ENCODE measurements at regions of chr4 and their contacts with region 1.

Region 1: DNA sequence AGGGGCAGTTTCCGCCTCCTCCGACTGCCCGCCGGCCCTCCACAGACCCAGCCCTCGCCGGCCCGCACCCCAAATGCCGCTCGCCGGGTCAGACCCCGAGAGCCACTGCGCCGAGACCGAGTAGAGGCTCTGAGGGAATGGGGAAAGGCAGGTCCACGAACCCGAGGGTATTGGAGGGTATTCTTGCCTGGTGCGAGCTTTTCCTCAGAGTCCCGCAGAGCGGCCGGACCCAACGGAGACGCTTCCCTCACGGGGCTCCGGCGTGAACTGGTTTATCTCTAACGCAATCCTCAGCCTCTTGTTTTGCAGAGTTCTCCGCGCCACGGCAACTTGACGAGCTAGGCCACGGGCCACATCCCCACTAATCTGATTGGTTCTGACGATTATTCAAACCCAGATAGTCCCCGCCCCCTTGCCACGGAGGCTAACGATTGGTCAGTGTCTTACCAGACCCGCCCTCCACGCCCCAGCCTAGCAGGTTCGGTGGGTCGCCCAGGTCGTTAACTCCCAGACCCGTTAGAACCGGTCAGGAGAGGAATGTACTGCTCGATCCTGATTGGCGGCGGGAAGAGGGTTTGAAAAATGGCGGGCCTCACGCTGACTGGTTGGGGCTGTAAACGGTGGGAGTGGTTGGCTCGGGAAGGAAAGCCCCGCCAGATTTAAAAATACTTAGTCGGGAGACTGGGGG is at the start of gene HMGB2:
- DNase-seq: peak; percentile 100
- ATAC-seq: peak; percentile 95 to 96
- H3K4me3 ChIP-seq: peak within 1 kb of the TSS; percentile 83 to 98 (median 92)
- H3K27ac ChIP-seq: peak within 1 kb of the TSS; percentile 94 to 99 (median 98)
- H3K4me1 ChIP-seq: peaks cover 8 to 20% of the 10 kb centered on the region in 2 donors
- H3K27me3 ChIP-seq: no peaks in the 10 kb centered on the region
- CTCF ChIP-seq: no peak
- POLR2A ChIP-seq: peak; percentile 93 to 98
- total RNA-seq, gene HMGB2: 4.1 to 61.6 (median 21.2) TPM

Region 2: GRCh38 chr4:173379929-173380328 is 45.7 kb after region 1 on chr4:
- in situ Hi-C with region 1: loop called in 1 of 4 experiments (anchors 5 kb)
- intact Hi-C with region 1: no loop called
- DNase-seq: no peak
- ATAC-seq: no peak
- H3K4me3 ChIP-seq: no peak overlapping the region
- H3K27ac ChIP-seq: no peak overlapping the region
- H3K4me1 ChIP-seq: no peaks in the 10 kb centered on the region
- H3K27me3 ChIP-seq: no peaks in the 10 kb centered on the region
- CTCF ChIP-seq: no peak
- POLR2A ChIP-seq: no peak

Region 3: DNA sequence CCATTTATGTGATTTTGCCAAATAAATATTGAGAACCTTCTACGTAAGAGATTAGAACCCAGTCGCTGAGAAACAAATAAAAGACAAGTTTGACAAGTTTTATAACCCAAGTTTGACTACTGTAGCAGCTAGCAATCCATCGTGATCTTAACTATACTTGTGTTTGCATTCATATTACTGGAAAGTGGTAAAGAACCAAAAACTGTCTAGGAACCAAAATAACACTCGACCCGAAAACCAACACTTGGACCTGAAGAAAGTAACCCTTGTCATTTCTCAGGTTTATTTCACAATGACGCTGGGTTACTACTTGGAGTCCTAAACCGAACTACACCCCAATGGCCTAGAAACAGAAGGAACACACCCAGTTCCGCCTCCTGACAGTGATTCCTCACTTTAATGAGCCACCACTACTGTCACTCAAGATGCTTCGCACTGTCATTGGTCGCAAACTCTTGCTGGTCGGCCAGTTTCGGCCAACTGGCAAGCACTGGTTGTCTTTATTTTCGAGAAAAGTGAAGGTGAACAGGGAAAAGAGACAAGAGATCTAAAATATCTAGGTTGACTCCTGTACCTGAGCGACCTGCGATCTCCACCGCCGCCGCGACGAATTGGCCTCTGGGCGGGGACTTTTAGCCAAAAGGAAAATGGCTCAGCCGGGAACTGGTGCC is 948.7 kb after region 1 on chr4:
- in situ Hi-C with region 1: loop called in 1 of 4 experiments (anchors 25 kb)
- intact Hi-C with region 1: loop called (anchors 2 kb)
- DNase-seq: peak; percentile 88
- ATAC-seq: peak; percentile 98 to 99
- H3K4me3 ChIP-seq: peak overlapping the region; percentile 79 to 91 (median 84)
- H3K27ac ChIP-seq: peak overlapping the region; percentile 96 to 99 (median 98)
- H3K4me1 ChIP-seq: peaks cover 39 to 41% of the 10 kb centered on the region in 2 donors
- H3K27me3 ChIP-seq: no peaks in the 10 kb centered on the region
- CTCF ChIP-seq: no peak
- POLR2A ChIP-seq: no peak